Psoas muscle (tissue), 8 donors: ENCODE measurements at regions of chr10 and their contacts with region 1.

Region 1: DNA sequence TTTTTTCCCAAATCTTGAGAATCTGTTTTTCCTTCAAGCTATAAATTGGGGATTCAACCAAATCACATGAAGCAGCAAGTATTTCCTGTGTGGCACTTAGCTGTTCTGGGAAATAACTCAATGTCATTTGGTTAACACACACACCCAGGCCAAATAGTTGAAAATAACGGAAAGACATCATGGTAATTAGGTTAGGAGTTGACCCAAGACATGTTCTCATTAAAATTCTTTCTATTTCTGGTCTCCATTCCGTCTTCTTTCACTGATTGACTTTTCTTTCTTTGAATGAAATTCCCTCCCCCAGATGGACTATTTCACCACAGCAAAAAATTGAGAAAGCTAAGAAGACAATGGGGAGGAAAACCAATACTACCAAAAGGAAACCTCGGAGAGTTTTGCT is 30.5 kb downstream of the NRP1 start:
- DNase-seq: no peak
- ATAC-seq: no peak
- H3K4me3 ChIP-seq: no peak overlapping the region
- H3K27ac ChIP-seq: peak overlapping the region; percentile 59
- H3K4me1 ChIP-seq: peaks cover 49% of the 10 kb centered on the region
- H3K27me3 ChIP-seq: no peaks in the 10 kb centered on the region
- CTCF ChIP-seq: no peak

Region 2: DNA sequence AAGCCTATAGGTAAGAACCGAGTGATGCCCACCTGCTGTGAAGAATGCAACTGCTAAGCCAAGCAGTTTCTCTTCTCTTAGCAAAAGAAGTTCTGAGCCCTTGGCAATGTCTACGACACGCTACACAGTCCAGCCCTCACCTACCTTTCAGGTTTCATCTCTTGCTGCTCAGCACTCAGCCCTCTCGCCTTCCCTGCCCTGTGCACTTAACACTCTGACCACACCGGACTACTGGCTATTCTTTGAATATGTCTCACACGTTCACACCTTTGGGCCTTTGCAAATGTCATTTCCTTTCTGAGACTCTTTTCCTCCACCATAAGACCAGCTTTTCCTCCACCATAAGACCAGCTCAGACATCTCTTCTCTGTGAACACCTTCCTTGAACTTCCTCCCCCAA is 278.9 kb before region 1 on chr10:
- intact Hi-C with region 1: no loop called
- DNase-seq: no peak
- ATAC-seq: no peak
- H3K4me3 ChIP-seq: no peak overlapping the region
- H3K27ac ChIP-seq: no peak overlapping the region
- H3K4me1 ChIP-seq: peaks cover 5% of the 10 kb centered on the region
- H3K27me3 ChIP-seq: no peaks in the 10 kb centered on the region
- CTCF ChIP-seq: no peak

Region 3: GRCh38 chr10:33293531-33294170 is 10.3 kb before region 1 on chr10:
- intact Hi-C with region 1: loop called in 1 of 2 experiments (anchors 1 kb)
- DNase-seq: no peak
- ATAC-seq: no peak
- H3K4me3 ChIP-seq: no peak overlapping the region
- H3K27ac ChIP-seq: no peak overlapping the region
- H3K4me1 ChIP-seq: peaks cover 56% of the 10 kb centered on the region
- H3K27me3 ChIP-seq: no peaks in the 10 kb centered on the region
- CTCF ChIP-seq: no peak